BJ (cell line): ENCODE measurements at regions of chr14 and their contacts with region 1.

Region 1: DNA sequence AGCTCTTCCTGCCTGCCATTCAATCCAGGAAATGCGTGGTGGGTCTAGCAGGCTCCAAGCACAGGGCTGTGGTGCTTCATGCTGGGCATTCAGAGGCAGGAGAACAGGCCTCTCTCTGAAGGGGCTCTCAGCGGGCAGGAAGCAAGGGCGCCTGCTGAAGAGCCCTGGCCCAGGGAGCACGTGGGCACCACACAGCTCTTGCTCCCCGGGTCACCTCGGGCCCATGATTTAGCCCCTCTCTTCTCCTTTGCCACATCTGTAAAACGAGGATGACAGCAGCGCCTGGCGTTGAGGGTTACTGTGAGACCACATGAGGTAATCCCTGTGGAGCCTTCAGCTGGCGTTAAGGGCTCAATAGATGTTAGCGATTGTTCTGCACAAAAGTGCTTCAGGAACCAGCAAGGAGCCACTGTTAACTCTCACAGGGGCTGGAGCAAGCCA is 37.6 kb upstream of the SPTLC2 start:
- DNase-seq: no peak
- H3K4me3 ChIP-seq: no peak overlapping the region
- H3K27me3 ChIP-seq: no peaks in the 10 kb centered on the region
- CTCF ChIP-seq: no peak

Region 2: DNA sequence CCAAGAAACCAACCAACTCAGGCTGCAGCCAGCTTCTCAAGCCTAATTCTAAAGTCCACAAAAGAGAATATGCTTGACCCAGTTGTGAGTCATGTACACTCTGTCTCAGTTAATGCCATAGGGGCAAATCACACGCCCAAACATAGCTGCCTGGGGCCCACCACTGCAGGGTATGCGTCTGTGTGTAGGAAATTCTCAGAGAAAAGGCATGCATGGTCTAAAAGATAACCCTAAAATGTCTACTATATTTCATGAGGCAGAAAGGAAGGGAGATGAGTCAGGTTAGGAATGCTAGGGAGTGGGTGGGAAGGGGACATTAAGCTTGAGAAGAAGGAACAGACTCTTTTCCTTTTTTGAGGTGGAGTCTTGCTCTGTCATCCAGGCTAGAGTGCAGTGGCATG is 15.2 kb before region 1 on chr14:
- CTCF ChIA-PET with region 1: interaction called, 10 read pairs
- POLR2A ChIA-PET with region 1: no interaction called
- DNase-seq: peak; percentile 91
- H3K4me3 ChIP-seq: no peak overlapping the region
- H3K27me3 ChIP-seq: no peaks in the 10 kb centered on the region
- CTCF ChIP-seq: no peak

Region 3: GRCh38 chr14:78122436-78122835 is 468.4 kb after region 1 on chr14:
- CTCF ChIA-PET with region 1: no interaction called
- POLR2A ChIA-PET with region 1: no interaction called
- DNase-seq: no peak
- H3K4me3 ChIP-seq: no peak overlapping the region
- H3K27me3 ChIP-seq: no peaks in the 10 kb centered on the region
- CTCF ChIP-seq: no peak